Adrenal gland (tissue), 19 donors: ENCODE measurements at regions of chr1 and their contacts with region 1.

Region 1: GRCh38 chr1:101309334-101310311 is 72.8 kb downstream of the S1PR1 start:
- DNase-seq: peak; percentile 53 to 80 (median 56)
- H3K4me3 ChIP-seq: peak overlapping the region in 2 of 4 donors; percentile 22 to 53
- H3K27ac ChIP-seq: no peak overlapping the region
- H3K4me1 ChIP-seq: peaks cover 0 to 6% of the 10 kb centered on the region in 2 donors
- H3K27me3 ChIP-seq: no peaks in the 10 kb centered on the region
- CTCF ChIP-seq: peak; percentile 76 to 84 (median 82)
- POLR2A ChIP-seq: no peak

Region 2: GRCh38 chr1:101357444-101357986 is 47.9 kb after region 1 on chr1:
- intact Hi-C with region 1: loop called (anchors 2 to 5 kb)
- DNase-seq: peak; percentile 47 to 82 (median 75)
- H3K4me3 ChIP-seq: no peak overlapping the region
- H3K27ac ChIP-seq: no peak overlapping the region
- H3K4me1 ChIP-seq: no peaks in the 10 kb centered on the region
- H3K27me3 ChIP-seq: no peaks in the 10 kb centered on the region
- CTCF ChIP-seq: peak; percentile 74 to 89 (median 83)
- POLR2A ChIP-seq: no peak

Region 3: GRCh38 chr1:101438359-101438758 is 128.7 kb after region 1 on chr1:
- intact Hi-C with region 1: loop called in 1 of 2 experiments (anchors 10 kb)
- DNase-seq: peak in 3 of 7 donors; percentile 11 to 26 (median 17)
- H3K4me3 ChIP-seq: no peak overlapping the region
- H3K27ac ChIP-seq: no peak overlapping the region
- H3K4me1 ChIP-seq: no peaks in the 10 kb centered on the region
- H3K27me3 ChIP-seq: no peaks in the 10 kb centered on the region
- CTCF ChIP-seq: peak in 5 of 6 experiments; percentile 9 to 29 (median 19)
- POLR2A ChIP-seq: no peak